IMR-90 (cell line): ENCODE measurements at regions of chr10 and their contacts with region 1.

Region 1: GRCh38 chr10:15097011-15097812 is at the start of gene RPP38:
- DNase-seq: peak; percentile 92
- ATAC-seq: peak; percentile 96
- H3K4me3 ChIP-seq: peak within 1 kb of the TSS; percentile 70
- H3K27ac ChIP-seq: peak within 1 kb of the TSS; percentile 95
- H3K4me1 ChIP-seq: no peaks in the 10 kb centered on the region; the same call in 1 of the 2 replicates
- H3K27me3 ChIP-seq: no peaks in the 10 kb centered on the region
- CTCF ChIP-seq: no peak
- POLR2A ChIP-seq: peak; percentile 84
- RAD21 ChIP-seq: no peak
- total RNA-seq, gene RPP38: 12.4 and 13.1 TPM in 2 replicates

Region 2: GRCh38 chr10:14507176-14507575 is 590.0 kb before region 1 on chr10:
- CTCF ChIA-PET with region 1: no interaction called
- POLR2A ChIA-PET with region 1: no interaction called
- dilution Hi-C with region 1: no loop called
- in situ Hi-C with region 1: loop called (anchors 25 kb)
- intact Hi-C with region 1: loop called (anchors 10 kb)
- DNase-seq: no peak
- ATAC-seq: no peak
- H3K4me3 ChIP-seq: no peak overlapping the region
- H3K27ac ChIP-seq: no peak overlapping the region
- H3K4me1 ChIP-seq: no peaks in the 10 kb centered on the region
- H3K27me3 ChIP-seq: no peaks in the 10 kb centered on the region
- CTCF ChIP-seq: no peak
- POLR2A ChIP-seq: no peak
- RAD21 ChIP-seq: no peak

Region 3: DNA sequence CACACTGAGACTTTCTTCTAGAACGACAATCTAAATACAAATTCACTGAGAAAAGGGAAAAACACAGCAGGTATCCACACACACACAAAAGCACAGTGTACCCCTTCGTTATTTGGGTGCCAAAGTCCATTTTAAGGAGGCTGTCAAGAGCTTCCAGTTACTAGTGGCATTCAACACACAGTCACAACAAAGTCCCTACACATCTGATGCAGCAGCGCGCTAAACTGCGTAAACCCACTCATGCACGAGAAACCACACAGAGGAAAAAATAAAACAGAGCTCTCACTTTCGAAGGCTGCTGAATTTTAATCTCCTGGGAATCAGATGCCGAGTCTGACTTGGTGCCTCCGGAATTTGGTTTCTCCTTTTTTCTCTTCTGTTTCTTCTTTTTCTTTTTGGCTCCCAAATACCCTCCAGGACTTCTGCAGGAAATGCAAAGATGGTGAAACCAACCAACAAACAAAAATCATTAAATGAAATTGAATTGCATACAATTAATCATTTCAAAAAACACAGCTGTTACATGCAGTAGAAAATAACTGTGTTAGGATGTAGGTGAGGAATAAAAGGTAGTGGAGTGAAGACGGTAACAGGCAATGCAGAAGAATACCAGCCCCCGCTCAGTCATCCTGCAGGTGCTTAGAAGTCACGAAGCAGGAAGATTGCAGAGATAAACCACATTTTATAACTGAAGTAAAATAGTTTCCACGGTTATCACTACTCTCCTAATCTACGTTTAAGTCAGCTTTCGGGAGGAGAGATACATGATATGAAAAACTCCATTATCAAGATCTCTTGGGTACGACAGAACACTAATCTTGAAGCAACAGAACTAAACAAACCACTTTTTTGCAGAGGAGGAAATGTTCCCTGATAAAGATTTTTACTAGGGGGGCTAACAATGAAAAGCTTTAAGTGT is 44.2 kb after region 1 on chr10:
- CTCF ChIA-PET with region 1: no interaction called
- POLR2A ChIA-PET with region 1: no interaction called
- dilution Hi-C with region 1: no loop called
- in situ Hi-C with region 1: no loop called
- intact Hi-C with region 1: no loop called
- DNase-seq: no peak
- ATAC-seq: no peak
- H3K4me3 ChIP-seq: no peak overlapping the region
- H3K27ac ChIP-seq: no peak overlapping the region
- H3K4me1 ChIP-seq: no peaks in the 10 kb centered on the region; the same call in 1 of the 2 replicates
- H3K27me3 ChIP-seq: no peaks in the 10 kb centered on the region
- CTCF ChIP-seq: no peak
- POLR2A ChIP-seq: no peak
- RAD21 ChIP-seq: no peak

Region 4: DNA sequence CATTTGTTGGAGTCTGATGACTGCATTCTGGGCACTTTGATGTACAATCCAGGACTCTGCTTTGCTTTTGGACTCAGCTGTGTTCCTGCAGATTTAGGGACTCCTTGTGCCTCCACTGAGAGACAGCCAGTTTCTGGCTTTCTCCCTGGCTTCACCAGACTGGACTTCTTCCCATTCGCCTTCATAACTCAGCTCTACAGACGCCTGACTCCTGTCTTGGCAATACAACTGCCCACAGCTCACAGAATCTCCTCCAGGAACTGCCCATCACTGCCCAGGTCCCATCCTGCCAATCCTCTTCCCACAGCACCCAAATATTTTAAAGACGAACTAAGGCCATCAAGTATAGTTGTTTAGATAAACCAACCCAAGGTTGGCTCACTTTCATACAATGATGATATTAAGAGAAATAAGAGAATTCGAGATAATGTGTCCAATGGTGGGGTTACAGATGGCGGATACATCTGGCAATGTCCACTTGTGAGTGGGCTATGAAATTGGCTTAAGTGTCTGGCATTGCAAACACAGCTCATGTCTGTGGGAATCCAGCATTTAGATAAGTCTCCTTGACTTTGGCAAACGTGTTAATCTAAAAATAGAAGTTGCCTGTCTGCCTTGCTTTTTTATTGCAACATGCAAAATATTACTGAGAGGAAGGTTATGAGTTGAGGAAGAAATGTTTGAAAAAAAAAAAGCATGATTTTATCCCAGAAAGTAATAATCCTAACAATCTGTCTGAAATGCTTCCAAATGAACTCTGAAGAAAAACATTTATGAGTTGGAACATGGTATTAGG is 527.4 kb after region 1 on chr10:
- CTCF ChIA-PET with region 1: no interaction called
- POLR2A ChIA-PET with region 1: no interaction called
- dilution Hi-C with region 1: no loop called
- in situ Hi-C with region 1: no loop called
- intact Hi-C with region 1: no loop called
- DNase-seq: no peak
- ATAC-seq: no peak
- H3K4me3 ChIP-seq: no peak overlapping the region
- H3K27ac ChIP-seq: no peak overlapping the region
- H3K4me1 ChIP-seq: peaks cover 2% of the 10 kb centered on the region; the same call in 1 of the 2 replicates
- H3K27me3 ChIP-seq: peaks cover 4% of the 10 kb centered on the region
- CTCF ChIP-seq: no peak
- POLR2A ChIP-seq: no peak
- RAD21 ChIP-seq: no peak